Spleen (tissue), 13 donors: ENCODE measurements at regions of chr11 and their contacts with region 1.

Region 1: GRCh38 chr11:63838678-63839507 is at the start of gene MARK2:
- DNase-seq: peak; percentile 99
- H3K4me3 ChIP-seq: peak within 1 kb of the TSS; percentile 76 to 99 (median 89)
- H3K27ac ChIP-seq: peak within 1 kb of the TSS; percentile 85 to 99 (median 96)
- H3K4me1 ChIP-seq: peaks cover 29 to 64% (median 56%) of the 10 kb centered on the region in 6 donors
- H3K27me3 ChIP-seq: no peaks in the 10 kb centered on the region
- CTCF ChIP-seq: peak in 2 of 11 experiments; percentile 7 to 37
- POLR2A ChIP-seq: no peak
- total RNA-seq, gene MARK2: 41.2 to 67.3 (median 48.6) TPM

Region 2: DNA sequence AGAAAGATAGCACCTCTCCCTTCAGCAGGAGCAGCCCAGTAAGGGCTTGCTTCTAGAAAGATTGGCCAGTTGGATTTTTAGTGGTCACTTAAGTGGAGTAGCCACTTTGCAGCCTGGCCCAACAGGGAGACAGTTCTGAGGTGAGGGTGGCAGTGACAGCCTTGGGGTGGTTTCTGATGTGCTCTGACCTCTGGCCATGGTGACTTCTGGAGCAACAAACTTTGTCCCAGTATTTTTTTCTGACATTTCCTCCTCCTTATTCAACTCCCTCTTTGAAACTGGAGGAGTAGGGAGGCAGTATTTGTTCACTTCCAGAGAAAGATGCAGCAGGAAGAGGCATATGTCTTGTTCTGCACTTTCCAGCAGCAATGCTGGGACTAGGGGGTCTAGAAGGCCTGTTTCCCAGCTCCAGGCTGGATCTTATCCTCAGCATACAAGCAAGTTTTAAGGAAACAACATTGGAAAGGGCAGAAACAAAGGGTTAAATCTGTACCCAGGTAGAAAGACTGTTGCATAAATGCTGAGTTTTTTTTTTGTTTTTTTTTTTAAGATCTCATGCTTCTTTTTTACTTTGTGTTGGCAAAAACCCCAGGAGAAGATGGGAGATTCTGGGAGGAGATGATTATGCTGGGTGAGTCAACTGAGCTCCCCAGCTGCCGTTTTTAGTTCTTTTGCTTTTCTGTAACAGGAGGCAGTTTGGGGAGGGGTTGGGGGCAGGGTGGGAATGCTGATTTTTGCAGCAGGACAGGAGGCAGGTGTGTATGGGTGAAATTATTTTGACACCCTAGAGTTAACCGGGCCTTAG is 40.9 kb after region 1 on chr11:
- intact Hi-C with region 1: loop called (anchors 5 kb)
- DNase-seq: no peak
- H3K4me3 ChIP-seq: no peak overlapping the region
- H3K27ac ChIP-seq: peak overlapping the region in 2 of 8 donors; percentile 2 to 36
- H3K4me1 ChIP-seq: peaks cover 11 to 96% (median 67%) of the 10 kb centered on the region in 6 donors
- H3K27me3 ChIP-seq: no peaks in the 10 kb centered on the region
- CTCF ChIP-seq: no peak
- POLR2A ChIP-seq: no peak

Region 3: GRCh38 chr11:63940786-63941185 is 101.9 kb after region 1 on chr11:
- intact Hi-C with region 1: loop called (anchors 2 kb)
- DNase-seq: no peak
- H3K4me3 ChIP-seq: no peak overlapping the region
- H3K27ac ChIP-seq: peak overlapping the region in 6 of 8 donors; percentile 20 to 87 (median 78)
- H3K4me1 ChIP-seq: peaks cover 19 to 76% (median 54%) of the 10 kb centered on the region in 6 donors
- H3K27me3 ChIP-seq: no peaks in the 10 kb centered on the region
- CTCF ChIP-seq: no peak
- POLR2A ChIP-seq: no peak